H1 (cell line): ENCODE measurements at regions of chr20 and their contacts with region 1.

Region 1: DNA sequence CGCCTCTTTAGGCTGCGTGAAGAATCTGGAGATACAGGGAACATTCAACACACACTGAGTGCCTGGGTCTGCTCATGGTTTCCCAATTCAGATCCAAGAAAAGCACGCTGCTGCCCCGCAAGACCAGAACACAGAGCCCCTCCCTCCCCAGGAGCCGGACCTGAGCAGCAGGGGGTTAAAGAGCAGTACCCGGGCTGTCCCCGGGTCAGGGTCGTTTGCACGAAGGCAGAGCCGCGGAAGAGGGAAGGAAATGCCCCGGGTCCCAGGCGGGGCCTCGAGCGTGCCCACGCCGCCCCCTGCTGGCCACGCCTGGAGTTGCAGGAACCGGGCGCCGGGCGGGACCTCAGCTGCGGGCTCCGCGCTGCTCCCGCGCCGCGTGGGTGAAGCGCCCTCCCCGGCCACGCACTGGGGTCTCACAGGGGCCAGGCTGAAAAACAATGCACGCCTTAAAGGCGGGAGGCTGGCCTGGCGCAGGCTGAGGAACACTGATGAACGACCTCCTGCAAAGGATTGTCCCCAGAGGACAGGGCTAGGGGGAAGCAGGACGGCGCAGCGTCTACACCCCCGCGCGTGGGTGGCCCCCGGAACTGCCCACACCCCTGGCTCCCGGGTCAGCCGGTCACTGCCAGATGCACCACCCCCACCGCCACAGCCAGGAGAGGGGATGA is 48.9 kb downstream of the ANKRD60 start:
- DNase-seq: peak; percentile 10 to 92
- H3K4me3 ChIP-seq: peak overlapping the region in 3 of 4 experiments; percentile 12 to 54 (median 29); a peak in 5 of 8 replicates
- H3K27ac ChIP-seq: no peak overlapping the region
- H3K4me1 ChIP-seq: peaks cover 0 to 6% (median 4%) of the 10 kb centered on the region in 4 experiments; a peak in 3 of 7 replicates
- H3K27me3 ChIP-seq: peaks cover 2 to 19% (median 14%) of the 10 kb centered on the region in 4 experiments; a peak in 6 of 7 replicates
- CTCF ChIP-seq: peak; percentile 88 to 92 (median 89)
- EP300 ChIP-seq: no peak
- POLR2A ChIP-seq: no peak
- RAD21 ChIP-seq: peak; percentile 91 to 93

Region 2: GRCh38 chr20:58192567-58192966 is 13.0 kb after region 1 on chr20:
- CTCF ChIA-PET with region 1: interaction called, 13 read pairs
- POLR2A ChIA-PET with region 1: no interaction called
- DNase-seq: peak in 1 of 2 experiments; percentile 87
- H3K4me3 ChIP-seq: no peak overlapping the region
- H3K27ac ChIP-seq: no peak overlapping the region
- H3K4me1 ChIP-seq: no peaks in the 10 kb centered on the region
- H3K27me3 ChIP-seq: no peaks in the 10 kb centered on the region
- CTCF ChIP-seq: peak; percentile 79 to 96 (median 81)
- EP300 ChIP-seq: no peak
- POLR2A ChIP-seq: no peak
- RAD21 ChIP-seq: peak; percentile 73 to 79

Region 3: GRCh38 chr20:58286729-58287128 is 107.2 kb after region 1 on chr20:
- CTCF ChIA-PET with region 1: no interaction called
- POLR2A ChIA-PET with region 1: no interaction called
- DNase-seq: no peak
- H3K4me3 ChIP-seq: no peak overlapping the region
- H3K27ac ChIP-seq: no peak overlapping the region
- H3K4me1 ChIP-seq: no peaks in the 10 kb centered on the region
- H3K27me3 ChIP-seq: no peaks in the 10 kb centered on the region
- CTCF ChIP-seq: no peak
- EP300 ChIP-seq: no peak
- POLR2A ChIP-seq: no peak
- RAD21 ChIP-seq: no peak